B cell (primary cell): ENCODE measurements at regions of chr16 and their contacts with region 1.

Region 1: GRCh38 chr16:8868416-8869211 is at the start of gene CARHSP1:
- DNase-seq: peak; percentile 89
- ATAC-seq: peak; percentile 85
- H3K4me3 ChIP-seq: peak within 1 kb of the TSS; percentile 76 to 89 (median 84)
- H3K4me3 Mint-ChIP-seq: peak within 1 kb of the TSS; percentile 94
- H3K27ac ChIP-seq: peak within 1 kb of the TSS; percentile 66 to 78
- H3K27ac Mint-ChIP-seq: peak within 1 kb of the TSS; percentile 93
- H3K4me1 ChIP-seq: peaks cover 34 to 68% of the 10 kb centered on the region in 2 donors
- H3K4me1 Mint-ChIP-seq: peaks cover 56% of the 10 kb centered on the region
- H3K27me3 ChIP-seq: no peaks in the 10 kb centered on the region
- H3K27me3 Mint-ChIP-seq: no peaks in the 10 kb centered on the region
- CTCF ChIP-seq: no peak
- total RNA-seq, gene CARHSP1: 63.1 and 64.2 TPM in 2 replicates

Region 2: GRCh38 chr16:8674413-8675022 is 194.1 kb before region 1 on chr16 and contains the start of gene ABAT:
- CTCF ChIA-PET with region 1: no interaction called
- POLR2A ChIA-PET with region 1: no interaction called
- intact Hi-C with region 1: loop called (anchors 1 kb)
- DNase-seq: peak; percentile 90
- ATAC-seq: peak; percentile 100
- H3K4me3 ChIP-seq: peak within 1 kb of the TSS; percentile 71 to 99 (median 81)
- H3K4me3 Mint-ChIP-seq: peak within 1 kb of the TSS; percentile 92
- H3K27ac ChIP-seq: peak within 1 kb of the TSS; percentile 51 to 83
- H3K27ac Mint-ChIP-seq: peak within 1 kb of the TSS; percentile 86
- H3K4me1 ChIP-seq: peaks cover 17 to 18% of the 10 kb centered on the region in 2 donors
- H3K4me1 Mint-ChIP-seq: peaks cover 24% of the 10 kb centered on the region
- H3K27me3 ChIP-seq: no peaks in the 10 kb centered on the region
- H3K27me3 Mint-ChIP-seq: no peaks in the 10 kb centered on the region
- CTCF ChIP-seq: no peak
- total RNA-seq, gene ABAT: 13.8 and 14.3 TPM in 2 replicates

Region 3: GRCh38 chr16:8885674-8886592 is 17.3 kb after region 1 on chr16:
- CTCF ChIA-PET with region 1: interaction called, 42 read pairs
- POLR2A ChIA-PET with region 1: interaction called, 11 read pairs
- intact Hi-C with region 1: loop called (anchors 1 kb)
- DNase-seq: peak; percentile 39
- ATAC-seq: no peak
- H3K4me3 ChIP-seq: no peak overlapping the region
- H3K4me3 Mint-ChIP-seq: no peak overlapping the region
- H3K27ac ChIP-seq: no peak overlapping the region
- H3K27ac Mint-ChIP-seq: peak overlapping the region; percentile 71
- H3K4me1 ChIP-seq: peaks cover 5 to 21% of the 10 kb centered on the region in 2 donors
- H3K4me1 Mint-ChIP-seq: peaks cover 23% of the 10 kb centered on the region
- H3K27me3 ChIP-seq: peaks cover 0 to 11% (median 5%) of the 10 kb centered on the region in 4 experiments
- H3K27me3 Mint-ChIP-seq: peaks cover 12% of the 10 kb centered on the region
- CTCF ChIP-seq: no peak

Region 4: DNA sequence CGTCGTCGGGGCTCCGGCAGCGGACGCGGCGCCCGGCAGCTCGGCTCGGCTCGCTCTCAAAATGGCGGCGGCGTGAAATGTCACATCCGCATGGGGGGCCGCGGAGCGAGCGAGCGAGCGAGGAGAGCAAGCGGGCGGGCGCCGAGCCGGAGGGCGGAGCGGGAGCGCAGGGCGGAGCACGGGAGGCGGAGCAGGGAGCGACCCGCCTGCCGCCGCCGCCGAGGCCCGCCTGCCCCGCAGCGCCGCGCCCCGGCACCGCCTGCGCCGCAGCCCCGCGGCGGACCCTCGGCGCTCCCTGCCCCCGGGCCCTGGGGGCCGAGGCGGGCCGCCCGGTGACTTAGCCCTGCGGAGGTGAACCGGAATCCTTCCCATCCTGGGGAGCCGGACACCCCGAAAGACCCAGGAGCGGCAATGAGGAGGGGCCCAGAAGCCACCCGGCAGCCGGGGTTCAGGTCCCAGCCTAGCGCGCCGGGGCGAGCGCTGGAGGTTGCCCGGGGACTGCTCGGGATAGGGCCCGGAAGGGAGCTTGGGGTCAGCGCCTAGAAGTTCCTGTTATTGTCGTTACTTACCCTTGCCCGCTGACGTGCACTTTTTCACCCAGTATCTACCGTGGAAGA is 95.3 kb after region 1 on chr16 and contains the start of gene USP7:
- CTCF ChIA-PET with region 1: no interaction called
- POLR2A ChIA-PET with region 1: interaction called, 6 read pairs
- intact Hi-C with region 1: loop called (anchors 2 kb)
- DNase-seq: peak; percentile 93
- ATAC-seq: peak; percentile 88
- H3K4me3 ChIP-seq: peak within 1 kb of the TSS; percentile 56 to 80 (median 65)
- H3K4me3 Mint-ChIP-seq: peak within 1 kb of the TSS; percentile 90
- H3K27ac ChIP-seq: peak within 1 kb of the TSS; percentile 87 to 89
- H3K27ac Mint-ChIP-seq: peak within 1 kb of the TSS; percentile 95
- H3K4me1 ChIP-seq: peaks cover 35 to 39% of the 10 kb centered on the region in 2 donors
- H3K4me1 Mint-ChIP-seq: peaks cover 39% of the 10 kb centered on the region
- H3K27me3 ChIP-seq: peaks cover 0 to 4% (median 0%) of the 10 kb centered on the region in 4 experiments
- H3K27me3 Mint-ChIP-seq: peaks cover 5% of the 10 kb centered on the region
- CTCF ChIP-seq: no peak
- total RNA-seq, gene USP7: 223 and 232 TPM in 2 replicates

Region 5: DNA sequence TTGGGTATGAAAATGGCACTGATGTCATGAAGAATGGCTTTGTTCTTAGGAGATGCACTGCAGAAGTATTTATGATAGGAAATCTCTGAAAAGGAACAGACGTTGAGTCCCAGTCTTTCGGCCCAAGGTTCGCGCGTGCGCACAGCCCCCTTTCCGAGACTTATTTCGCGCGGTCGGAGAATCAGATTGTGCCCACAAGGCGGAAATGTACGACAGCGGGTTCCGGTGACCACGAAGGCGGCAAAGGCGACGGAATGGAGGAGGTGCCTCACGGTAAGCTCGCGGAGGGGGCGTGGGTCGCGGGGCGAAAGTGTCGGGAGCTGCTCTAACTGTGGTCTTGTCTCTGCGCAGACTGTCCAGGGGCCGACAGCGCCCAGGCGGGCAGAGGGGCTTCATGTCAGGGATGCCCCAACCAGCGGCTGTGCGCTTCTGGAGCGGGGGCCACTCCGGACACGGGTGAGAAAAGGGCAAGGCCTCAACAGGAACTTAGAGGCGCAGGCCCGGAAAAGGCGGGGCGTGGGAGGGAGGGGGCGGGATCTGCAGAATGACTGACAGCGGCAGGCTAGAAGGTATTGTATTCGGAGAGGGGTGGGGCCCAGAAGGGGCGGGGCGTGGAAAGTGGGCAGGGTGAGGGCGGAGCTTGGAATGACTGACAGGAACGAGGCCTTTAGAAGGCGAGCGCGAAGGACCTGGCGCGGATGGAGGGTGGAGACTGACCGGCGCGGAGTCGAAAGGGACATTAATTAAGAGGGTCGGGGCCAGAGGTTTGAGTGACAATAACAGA is 1875.2 kb after region 1 on chr16 and contains the start of gene NUBP1:
- CTCF ChIA-PET with region 1: no interaction called
- POLR2A ChIA-PET with region 1: interaction called, 4 read pairs
- intact Hi-C with region 1: loop called (anchors 5 kb)
- DNase-seq: peak; percentile 100
- ATAC-seq: peak; percentile 93
- H3K4me3 ChIP-seq: peak within 1 kb of the TSS; percentile 61 to 85 (median 73)
- H3K4me3 Mint-ChIP-seq: peak within 1 kb of the TSS; percentile 93
- H3K27ac ChIP-seq: peak within 1 kb of the TSS; percentile 93 to 97
- H3K27ac Mint-ChIP-seq: peak within 1 kb of the TSS; percentile 97
- H3K4me1 ChIP-seq: peaks cover 31 to 37% of the 10 kb centered on the region in 2 donors
- H3K4me1 Mint-ChIP-seq: peaks cover 55% of the 10 kb centered on the region
- H3K27me3 ChIP-seq: no peaks in the 10 kb centered on the region
- H3K27me3 Mint-ChIP-seq: no peaks in the 10 kb centered on the region
- CTCF ChIP-seq: no peak
- total RNA-seq, gene NUBP1: 54.3 and 67.3 TPM in 2 replicates